ENCODE measurements at regions of chr17 and their contacts with region 1.

Region 1: GRCh38 chr17:44324571-44325275 is at the start of gene SLC25A39:
- DNase-seq: peak; percentile 91 to 99 (median 95)

Region 2: DNA sequence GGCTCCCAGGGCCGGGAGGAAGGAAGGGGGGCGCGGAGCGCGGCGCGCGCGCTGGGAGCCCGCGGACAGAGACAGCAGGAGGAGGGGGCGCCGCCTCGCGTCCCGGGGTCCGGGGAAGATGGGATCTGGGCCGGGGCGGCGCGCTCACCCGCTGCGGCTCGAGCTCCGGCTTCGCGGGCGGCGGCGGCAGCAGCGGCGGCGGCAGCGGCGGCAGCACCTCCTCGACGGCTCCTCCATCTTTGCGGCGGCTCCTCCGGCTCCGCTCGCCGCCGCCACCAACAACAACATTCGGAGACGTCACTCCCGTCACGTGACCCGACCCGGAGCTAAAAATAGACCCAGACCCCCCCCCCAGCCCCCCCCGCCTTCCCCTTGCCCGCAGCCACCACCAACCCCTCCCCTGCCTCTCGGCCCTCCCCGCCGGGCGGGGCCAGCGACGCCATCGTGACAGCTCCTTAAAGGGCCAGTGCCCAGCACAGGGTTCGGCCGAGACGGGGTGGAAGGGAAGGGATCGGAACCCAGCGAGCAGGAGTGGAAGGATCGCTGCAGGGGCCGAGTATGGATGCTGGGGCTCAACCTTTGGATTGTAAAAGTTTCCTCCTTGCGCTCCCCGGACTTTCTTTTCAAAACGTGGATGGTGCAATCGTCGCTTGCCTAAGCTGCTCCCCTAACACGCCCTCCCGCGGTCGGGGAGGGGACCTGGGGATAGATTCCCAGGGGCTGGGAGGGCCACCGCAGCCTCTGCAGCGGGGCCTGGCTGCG is 201.2 kb before region 1 on chr17 and contains the start of gene HDAC5:
- intact Hi-C with region 1: loop called (anchors 10 kb)
- DNase-seq: peak; percentile 95 to 100 (median 97)

Region 3: GRCh38 chr17:44141717-44142285 is 182.9 kb before region 1 on chr17 and contains the start of gene HROB:
- intact Hi-C with region 1: loop called (anchors 5 kb)
- DNase-seq: peak; percentile 86 to 99 (median 97)

Region 4: DNA sequence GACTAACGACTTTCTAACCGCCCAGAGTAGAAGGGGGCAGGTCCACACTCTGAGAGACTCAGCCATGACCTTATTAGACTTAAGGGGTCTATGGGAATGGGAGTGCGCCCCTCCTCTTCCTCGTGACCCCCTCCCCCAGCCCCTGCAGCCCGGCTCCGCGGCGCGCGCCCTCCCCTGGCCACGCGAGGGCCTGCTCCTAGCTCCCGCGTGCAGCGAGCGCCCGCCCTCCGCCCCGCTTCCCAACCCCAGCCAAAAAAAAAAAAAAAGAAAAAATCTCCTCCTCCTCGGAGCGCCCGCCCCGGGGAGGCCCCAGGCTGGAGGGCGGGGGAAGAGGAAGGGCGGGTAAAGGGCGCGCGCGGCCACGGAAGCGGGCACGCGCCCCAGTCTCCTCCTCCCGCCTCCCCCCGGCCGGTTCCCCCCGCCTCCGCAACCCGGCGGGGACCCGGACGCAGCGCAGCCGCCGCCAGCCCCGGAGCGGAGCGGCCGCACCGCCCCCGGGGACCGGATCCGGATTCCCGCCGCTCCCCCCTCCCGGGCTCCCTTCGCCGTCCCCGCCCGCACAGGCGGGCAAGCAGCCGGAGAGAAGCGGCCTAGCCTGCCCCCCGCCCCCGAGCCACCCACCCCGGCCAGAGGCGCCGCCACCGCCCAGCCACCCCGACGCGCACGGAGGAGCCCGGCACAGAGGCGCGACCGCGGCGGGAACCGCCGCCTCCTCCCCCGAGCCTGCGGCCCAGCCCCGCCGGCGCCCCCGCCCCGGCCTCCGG is 106.2 kb before region 1 on chr17:
- intact Hi-C with region 1: loop called (anchors 2 kb)
- DNase-seq: peak; percentile 75 to 98 (median 82)

Region 5: DNA sequence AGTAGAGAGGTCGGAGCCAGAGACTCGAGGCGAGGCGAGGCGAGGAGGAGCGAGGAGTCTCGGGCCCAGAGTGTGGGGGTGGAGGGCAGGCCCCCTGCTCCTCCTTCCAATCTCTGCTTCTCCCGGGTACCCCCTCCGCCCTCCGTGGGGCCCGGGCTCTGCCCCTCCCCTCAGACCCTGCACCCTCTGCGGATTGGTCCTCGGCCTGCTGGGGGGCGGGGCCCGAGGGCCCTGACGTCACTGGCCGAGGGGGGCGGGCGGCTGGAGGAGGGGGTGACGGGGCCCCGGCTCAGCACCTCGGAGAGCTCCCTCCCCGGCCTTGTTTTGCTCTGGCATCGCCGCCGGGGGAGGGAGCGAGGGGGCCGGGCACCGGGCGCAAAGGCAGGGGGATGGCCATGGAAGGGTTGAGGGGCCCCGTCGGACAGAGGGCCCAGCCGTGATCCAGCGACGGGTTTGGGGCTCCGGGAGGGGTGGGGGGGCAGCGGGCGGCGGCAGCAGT is 16.4 kb before region 1 on chr17 and contains the start of gene RUNDC3A:
- intact Hi-C with region 1: loop called (anchors 2 kb)
- DNase-seq: peak; percentile 88 to 99 (median 92)

Measured in posterior cingulate gyrus (tissue), 11 donors.